ENCODE measurements at regions of chr2 and their contacts with region 1.

Region 1: DNA sequence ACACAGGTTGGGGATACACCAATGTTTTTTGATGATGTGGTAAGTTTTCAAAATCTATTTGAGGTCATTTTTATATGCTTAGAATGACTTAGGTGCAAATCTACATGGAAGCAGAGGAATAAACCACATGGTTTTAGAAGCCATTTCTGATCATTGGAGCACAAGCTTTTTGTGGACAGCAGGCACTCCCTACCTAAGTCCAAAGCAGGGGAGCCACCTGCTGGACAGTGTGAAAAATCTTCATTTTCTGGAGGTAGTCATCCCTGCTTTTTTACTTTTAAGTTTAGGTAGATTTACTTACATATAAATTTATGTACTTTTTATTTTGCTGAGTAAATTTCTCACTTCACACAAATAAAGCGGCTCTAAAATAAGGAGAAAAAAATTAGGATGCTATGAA is 323.2 kb downstream of the PLCL1 start:
- DNase-seq: peak; percentile 65
- H3K4me3 Mint-ChIP-seq: no peak overlapping the region
- H3K27ac Mint-ChIP-seq: no peak overlapping the region
- H3K4me1 Mint-ChIP-seq: no peaks in the 10 kb centered on the region
- H3K27me3 Mint-ChIP-seq: no peaks in the 10 kb centered on the region

Region 2: DNA sequence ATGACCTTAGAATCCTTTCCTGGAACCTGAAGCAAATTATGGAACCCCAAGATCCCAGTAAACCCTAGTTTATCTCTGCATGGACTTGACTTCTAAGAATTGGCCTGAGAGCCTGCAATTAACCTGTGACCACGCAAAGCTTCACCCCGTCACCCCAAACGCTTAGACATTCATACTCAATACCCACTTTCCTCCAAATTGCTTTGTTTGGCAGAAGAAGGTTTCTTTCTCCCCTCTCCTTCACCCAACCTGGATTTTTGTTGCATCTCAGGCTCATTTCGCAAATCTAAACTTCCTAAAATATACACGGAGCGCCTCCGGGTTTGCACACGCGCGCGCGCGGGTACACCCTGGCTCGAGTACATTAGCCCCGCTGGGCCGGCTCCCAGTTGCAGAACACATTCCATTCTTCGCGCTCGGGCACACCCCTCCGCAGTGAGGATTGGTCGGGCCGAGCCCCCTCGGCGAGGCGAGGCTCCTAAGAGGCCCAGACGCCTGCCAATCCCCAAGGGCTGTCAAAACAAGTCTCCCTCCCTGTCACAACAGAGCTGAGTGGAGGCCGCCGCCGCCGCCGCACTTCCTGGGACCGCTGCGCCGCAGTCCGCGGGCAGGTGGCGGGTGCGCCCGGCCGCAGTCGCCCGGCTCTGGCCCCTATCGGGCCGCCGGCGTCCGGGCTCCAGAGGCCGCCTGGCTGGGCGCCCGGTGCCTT is 323.4 kb before region 1 on chr2 and contains the start of gene PLCL1:
- CTCF ChIA-PET with region 1: interaction called, 13 read pairs
- DNase-seq: peak; percentile 94
- H3K4me3 Mint-ChIP-seq: peak within 1 kb of the TSS; percentile 88
- H3K27ac Mint-ChIP-seq: peak within 1 kb of the TSS; percentile 85
- H3K4me1 Mint-ChIP-seq: peaks cover 41% of the 10 kb centered on the region
- H3K27me3 Mint-ChIP-seq: peaks cover 16% of the 10 kb centered on the region

Region 3: GRCh38 chr2:197851451-197851850 is 276.2 kb before region 1 on chr2:
- CTCF ChIA-PET with region 1: interaction called, 17 read pairs
- DNase-seq: peak; percentile 30
- H3K4me3 Mint-ChIP-seq: no peak overlapping the region
- H3K27ac Mint-ChIP-seq: no peak overlapping the region
- H3K4me1 Mint-ChIP-seq: peaks cover 40% of the 10 kb centered on the region
- H3K27me3 Mint-ChIP-seq: no peaks in the 10 kb centered on the region

Region 4: GRCh38 chr2:198220763-198221610 is 93.4 kb after region 1 on chr2:
- CTCF ChIA-PET with region 1: no interaction called
- DNase-seq: no peak
- H3K4me3 Mint-ChIP-seq: no peak overlapping the region
- H3K27ac Mint-ChIP-seq: no peak overlapping the region
- H3K4me1 Mint-ChIP-seq: no peaks in the 10 kb centered on the region
- H3K27me3 Mint-ChIP-seq: peaks cover 4% of the 10 kb centered on the region

Measured in activated naive CD4-positive, alpha-beta T cell treated with anti-CD3 and anti-CD28 coated beads, Interleukin-2, amount 10 ng/mL, durations not matched to agents 7 days and 5 days (primary cell).